Activated T-helper 1 cell treated with anti-CD3 and anti-CD28 coated beads, Interleukin-12 subunit alpha, Interleukin-12 subunit beta, Interleukin-2, Interleukin-4 antibody, amounts not matched to agents 30 ng/mL and 10 ng/mL and 1 ng/mL, durations not matched to agents 14 hours and 24 hours and 36 hours (primary cell): ENCODE measurements at regions of chr4 and their contacts with region 1.

Region 1: GRCh38 chr4:112636688-112637551 is at the starts of genes LARP7 and ZGRF1:
- DNase-seq: peak; percentile 97
- H3K4me3 Mint-ChIP-seq: no peak within 1 kb of the TSS
- H3K27ac Mint-ChIP-seq: peak within 1 kb of the TSS; percentile 61
- H3K4me1 Mint-ChIP-seq: peaks cover 16% of the 10 kb centered on the region
- H3K27me3 Mint-ChIP-seq: no peaks in the 10 kb centered on the region
- total RNA-seq, gene LARP7: 45.3 and 46.1 TPM in 2 replicates
- total RNA-seq, gene ZGRF1: 31.0 and 33.1 TPM in 2 replicates

Region 2: DNA sequence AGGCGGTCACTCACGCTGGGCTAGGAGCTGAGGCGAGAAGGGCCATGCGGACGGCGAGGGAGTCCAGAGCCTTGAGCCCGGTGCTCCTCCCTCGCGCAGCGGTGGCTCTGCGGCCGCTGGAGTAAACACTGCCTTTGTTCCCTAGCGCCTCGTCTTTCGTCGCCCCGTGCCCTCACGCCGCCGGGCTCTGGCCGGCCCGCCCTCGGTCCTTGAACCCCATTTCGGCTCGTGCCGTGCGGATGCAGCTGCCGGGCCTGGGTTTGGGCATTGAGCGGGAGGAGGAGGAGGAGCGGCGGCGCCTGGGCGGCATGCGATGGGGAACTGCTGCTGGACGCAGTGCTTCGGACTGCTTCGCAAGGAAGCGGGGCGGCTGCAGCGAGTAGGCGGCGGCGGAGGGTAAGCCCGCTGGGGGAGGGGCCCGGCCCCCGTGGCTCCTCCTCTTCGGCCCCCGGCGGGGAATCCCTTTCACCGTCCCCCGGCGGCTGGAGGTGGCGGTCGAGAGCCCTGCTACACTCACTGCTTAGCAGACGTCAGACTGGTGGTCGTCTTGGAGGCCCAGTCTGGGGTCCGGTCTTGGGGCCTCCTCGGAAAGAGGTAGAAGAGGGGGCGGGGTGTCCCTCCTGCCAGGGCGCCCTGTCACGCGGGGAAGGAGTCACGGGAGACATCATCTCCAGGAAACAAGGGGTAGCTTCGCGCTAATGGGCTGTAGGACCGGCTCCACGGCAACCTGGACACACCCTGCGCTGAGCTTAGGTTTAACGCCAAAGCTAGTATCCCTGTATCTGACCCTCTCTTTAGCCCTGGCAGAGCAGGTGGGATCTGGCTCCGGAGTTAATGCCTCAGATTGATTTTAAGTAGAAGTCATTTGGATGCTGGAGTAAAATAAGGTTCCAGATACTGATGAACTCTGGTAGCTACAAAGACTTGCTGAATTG is 404.9 kb before region 1 on chr4 and contains the start of gene AP1AR:
- intact Hi-C with region 1: loop called (anchors 1 kb)
- DNase-seq: peak; percentile 80
- H3K4me3 Mint-ChIP-seq: peak within 1 kb of the TSS; percentile 91
- H3K27ac Mint-ChIP-seq: peak within 1 kb of the TSS; percentile 98
- H3K4me1 Mint-ChIP-seq: peaks cover 34% of the 10 kb centered on the region
- H3K27me3 Mint-ChIP-seq: peaks cover 16% of the 10 kb centered on the region
- total RNA-seq, gene AP1AR: 25.1 and 26.6 TPM in 2 replicates

Region 3: GRCh38 chr4:112515304-112516067 is 121.4 kb before region 1 on chr4:
- intact Hi-C with region 1: loop called (anchors 2 kb)
- DNase-seq: peak; percentile 49
- H3K4me3 Mint-ChIP-seq: peak overlapping the region; percentile 95
- H3K27ac Mint-ChIP-seq: peak overlapping the region; percentile 93
- H3K4me1 Mint-ChIP-seq: peaks cover 79% of the 10 kb centered on the region
- H3K27me3 Mint-ChIP-seq: peaks cover 82% of the 10 kb centered on the region

Region 4: DNA sequence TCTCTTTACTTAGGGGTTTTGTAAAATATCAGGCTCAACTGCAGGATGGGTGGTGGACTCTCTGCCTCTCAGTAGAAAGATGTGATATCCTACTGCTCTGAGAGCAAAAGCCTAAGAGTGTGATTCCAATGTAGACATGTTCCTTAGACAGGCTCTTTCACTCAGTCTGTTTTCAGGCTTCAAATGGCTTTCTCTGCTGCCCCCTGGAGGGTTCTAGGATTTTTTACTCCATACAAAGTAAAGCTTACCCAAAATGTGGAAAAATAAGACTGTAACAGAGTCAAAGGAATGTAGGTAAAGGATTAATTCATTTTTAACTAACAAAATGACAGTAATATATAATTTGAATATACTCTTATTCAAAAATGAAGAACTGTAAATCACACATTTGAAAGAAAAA is 32.3 kb before region 1 on chr4:
- intact Hi-C with region 1: no loop called
- DNase-seq: peak; percentile 9
- H3K4me3 Mint-ChIP-seq: no peak overlapping the region
- H3K27ac Mint-ChIP-seq: no peak overlapping the region
- H3K4me1 Mint-ChIP-seq: no peaks in the 10 kb centered on the region
- H3K27me3 Mint-ChIP-seq: no peaks in the 10 kb centered on the region

Region 5: GRCh38 chr4:112765317-112765975 is 128.5 kb after region 1 on chr4:
- intact Hi-C with region 1: loop called (anchors 1 kb)
- DNase-seq: no peak
- H3K4me3 Mint-ChIP-seq: no peak overlapping the region
- H3K27ac Mint-ChIP-seq: no peak overlapping the region
- H3K4me1 Mint-ChIP-seq: peaks cover 5% of the 10 kb centered on the region
- H3K27me3 Mint-ChIP-seq: peaks cover 6% of the 10 kb centered on the region

Region 6: GRCh38 chr4:112951362-112952312 is 314.7 kb after region 1 on chr4:
- intact Hi-C with region 1: loop called (anchors 1 kb)
- DNase-seq: no peak
- H3K4me3 Mint-ChIP-seq: no peak overlapping the region
- H3K27ac Mint-ChIP-seq: no peak overlapping the region
- H3K4me1 Mint-ChIP-seq: no peaks in the 10 kb centered on the region
- H3K27me3 Mint-ChIP-seq: no peaks in the 10 kb centered on the region